CD4-positive, alpha-beta memory T cell (primary cell): ENCODE measurements at regions of chr2 and their contacts with region 1.

Region 1: GRCh38 chr2:204145263-204145751 is 208.7 kb downstream of the ICOS start:
- DNase-seq: peak; percentile 68 to 76 (median 74)
- H3K4me3 ChIP-seq: peak overlapping the region; percentile 25 to 40
- H3K4me3 Mint-ChIP-seq: peak overlapping the region; percentile 78 to 90 (median 85)
- H3K27ac ChIP-seq: no peak overlapping the region
- H3K27ac Mint-ChIP-seq: peak overlapping the region in 6 of 7 donors; percentile 20 to 91 (median 56)
- H3K4me1 ChIP-seq: peaks cover 11% of the 10 kb centered on the region
- H3K4me1 Mint-ChIP-seq: peaks cover 0 to 11% (median 9%) of the 10 kb centered on the region in 4 donors
- H3K27me3 ChIP-seq: no peaks in the 10 kb centered on the region
- H3K27me3 Mint-ChIP-seq: peaks cover 3 to 16% of the 10 kb centered on the region in 2 donors

Region 2: GRCh38 chr2:204159526-204159925 is 14.2 kb after region 1 on chr2:
- CTCF ChIA-PET with region 1: interaction called, 12 read pairs
- POLR2A ChIA-PET with region 1: no interaction called
- intact Hi-C with region 1: no loop called
- DNase-seq: no peak
- H3K4me3 ChIP-seq: no peak overlapping the region
- H3K4me3 Mint-ChIP-seq: no peak overlapping the region
- H3K27ac ChIP-seq: no peak overlapping the region
- H3K27ac Mint-ChIP-seq: no peak overlapping the region
- H3K4me1 ChIP-seq: no peaks in the 10 kb centered on the region
- H3K4me1 Mint-ChIP-seq: no peaks in the 10 kb centered on the region
- H3K27me3 ChIP-seq: no peaks in the 10 kb centered on the region
- H3K27me3 Mint-ChIP-seq: peaks cover 8 to 10% of the 10 kb centered on the region in 2 donors

Region 3: GRCh38 chr2:204249437-204249836 is 104.1 kb after region 1 on chr2:
- CTCF ChIA-PET with region 1: no interaction called
- POLR2A ChIA-PET with region 1: no interaction called
- intact Hi-C with region 1: no loop called
- DNase-seq: no peak
- H3K4me3 ChIP-seq: no peak overlapping the region
- H3K4me3 Mint-ChIP-seq: no peak overlapping the region
- H3K27ac ChIP-seq: no peak overlapping the region
- H3K27ac Mint-ChIP-seq: no peak overlapping the region
- H3K4me1 ChIP-seq: peaks cover 7% of the 10 kb centered on the region
- H3K4me1 Mint-ChIP-seq: no peaks in the 10 kb centered on the region
- H3K27me3 ChIP-seq: no peaks in the 10 kb centered on the region
- H3K27me3 Mint-ChIP-seq: peaks cover 14 to 19% of the 10 kb centered on the region in 2 donors

Region 4: GRCh38 chr2:204260162-204260877 is 115.0 kb after region 1 on chr2:
- CTCF ChIA-PET with region 1: interaction called, 5 read pairs
- POLR2A ChIA-PET with region 1: no interaction called
- intact Hi-C with region 1: loop called (anchors 1 kb)
- DNase-seq: peak; percentile 17 to 40 (median 23)
- H3K4me3 ChIP-seq: no peak overlapping the region
- H3K4me3 Mint-ChIP-seq: no peak overlapping the region
- H3K27ac ChIP-seq: no peak overlapping the region
- H3K27ac Mint-ChIP-seq: no peak overlapping the region
- H3K4me1 ChIP-seq: no peaks in the 10 kb centered on the region
- H3K4me1 Mint-ChIP-seq: peaks cover 0 to 2% (median 0%) of the 10 kb centered on the region in 4 donors
- H3K27me3 ChIP-seq: no peaks in the 10 kb centered on the region
- H3K27me3 Mint-ChIP-seq: peaks cover 19 to 26% of the 10 kb centered on the region in 2 donors

Region 5: DNA sequence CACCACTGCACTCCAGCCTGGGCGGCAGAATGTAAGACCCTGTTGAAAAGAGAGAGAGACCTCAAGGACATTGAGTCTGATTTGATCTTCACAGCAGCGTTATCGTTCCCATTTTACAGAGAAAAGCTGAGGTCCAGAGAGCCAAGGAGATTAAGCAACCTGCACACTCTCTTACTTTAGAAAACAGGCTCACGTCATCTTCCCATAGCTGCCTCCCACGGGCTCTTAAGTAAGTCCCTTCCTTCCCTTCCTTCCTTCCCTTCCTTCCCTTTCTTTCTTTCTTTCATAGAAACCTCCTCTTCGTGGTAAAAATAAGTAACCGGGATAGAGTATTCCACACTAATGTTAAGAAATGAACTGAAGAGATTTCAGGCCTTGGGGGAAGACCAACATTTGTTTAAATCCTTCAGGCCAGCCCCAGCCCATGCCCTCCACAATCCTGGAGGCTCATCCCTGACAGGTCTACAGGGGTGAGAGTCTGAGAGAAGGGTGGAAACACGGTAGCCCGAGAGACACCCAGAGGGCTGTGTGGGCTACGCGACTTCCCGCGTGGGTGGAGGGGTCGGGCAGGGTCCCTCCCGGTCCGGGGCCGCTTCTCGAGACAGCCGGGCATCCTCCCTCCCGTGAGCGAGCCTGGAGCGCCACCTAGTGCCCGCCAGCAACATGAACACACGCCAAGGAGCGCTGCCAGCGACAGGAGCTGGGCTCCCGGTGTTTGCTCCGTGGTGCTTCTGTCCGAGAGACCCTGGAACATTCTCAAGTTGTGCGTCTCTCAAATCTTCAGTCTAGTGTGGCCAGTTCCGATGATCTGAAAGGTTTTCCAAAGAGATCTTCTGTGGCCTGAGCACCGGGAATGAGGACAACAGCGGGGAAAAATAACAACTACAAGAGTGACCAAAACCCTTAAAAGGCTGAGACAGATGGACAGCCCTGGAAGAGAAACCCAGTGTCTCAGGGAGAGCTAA is 1780.3 kb after region 1 on chr2:
- CTCF ChIA-PET with region 1: interaction called, 3 read pairs
- POLR2A ChIA-PET with region 1: no interaction called
- intact Hi-C with region 1: loop called (anchors 2 kb)
- DNase-seq: peak; percentile 45 to 55 (median 49)
- H3K4me3 ChIP-seq: no peak overlapping the region
- H3K4me3 Mint-ChIP-seq: peak overlapping the region in 4 of 8 donors; percentile 21 to 60 (median 41)
- H3K27ac ChIP-seq: no peak overlapping the region
- H3K27ac Mint-ChIP-seq: peak overlapping the region in 1 of 7 donors; percentile 7
- H3K4me1 ChIP-seq: peaks cover 10% of the 10 kb centered on the region
- H3K4me1 Mint-ChIP-seq: peaks cover 4 to 15% (median 8%) of the 10 kb centered on the region in 4 donors
- H3K27me3 ChIP-seq: peaks cover 8% of the 10 kb centered on the region
- H3K27me3 Mint-ChIP-seq: peaks cover 46 to 51% of the 10 kb centered on the region in 2 donors